ENCODE measurements at regions of chr3 and their contacts with region 1.

Region 1: GRCh38 chr3:120095226-120095978 is 1.2 kb upstream of the GSK3B start:
- DNase-seq: peak; percentile 68 to 91 (median 81)
- ATAC-seq: peak; percentile 27
- H3K4me3 ChIP-seq: peak overlapping the region; percentile 84 to 89
- H3K4me3 Mint-ChIP-seq: no peak overlapping the region
- H3K27ac ChIP-seq: peak overlapping the region; percentile 98
- H3K27ac Mint-ChIP-seq: no peak overlapping the region
- H3K4me1 ChIP-seq: peaks cover 32% of the 10 kb centered on the region
- H3K4me1 Mint-ChIP-seq: peaks cover 26% of the 10 kb centered on the region
- H3K27me3 ChIP-seq: no peaks in the 10 kb centered on the region
- H3K27me3 Mint-ChIP-seq: no peaks in the 10 kb centered on the region
- CTCF ChIP-seq: no peak

Region 2: GRCh38 chr3:119463171-119464169 is 631.9 kb before region 1 on chr3 and contains the start of gene TMEM39A:
- CTCF ChIA-PET with region 1: no interaction called
- POLR2A ChIA-PET with region 1: interaction called, 10 read pairs
- intact Hi-C with region 1: loop called (anchors 1 to 5 kb)
- DNase-seq: peak; percentile 98 to 100 (median 99)
- ATAC-seq: peak; percentile 86
- H3K4me3 ChIP-seq: peak within 1 kb of the TSS; percentile 93 to 94
- H3K4me3 Mint-ChIP-seq: peak within 1 kb of the TSS; percentile 93
- H3K27ac ChIP-seq: peak within 1 kb of the TSS; percentile 85 to 97
- H3K27ac Mint-ChIP-seq: peak within 1 kb of the TSS; percentile 96
- H3K4me1 ChIP-seq: peaks cover 19% of the 10 kb centered on the region
- H3K4me1 Mint-ChIP-seq: peaks cover 44% of the 10 kb centered on the region
- H3K27me3 ChIP-seq: no peaks in the 10 kb centered on the region
- H3K27me3 Mint-ChIP-seq: no peaks in the 10 kb centered on the region
- CTCF ChIP-seq: no peak
- total RNA-seq, gene TMEM39A: 67.8 to 68.0 TPM

Region 3: DNA sequence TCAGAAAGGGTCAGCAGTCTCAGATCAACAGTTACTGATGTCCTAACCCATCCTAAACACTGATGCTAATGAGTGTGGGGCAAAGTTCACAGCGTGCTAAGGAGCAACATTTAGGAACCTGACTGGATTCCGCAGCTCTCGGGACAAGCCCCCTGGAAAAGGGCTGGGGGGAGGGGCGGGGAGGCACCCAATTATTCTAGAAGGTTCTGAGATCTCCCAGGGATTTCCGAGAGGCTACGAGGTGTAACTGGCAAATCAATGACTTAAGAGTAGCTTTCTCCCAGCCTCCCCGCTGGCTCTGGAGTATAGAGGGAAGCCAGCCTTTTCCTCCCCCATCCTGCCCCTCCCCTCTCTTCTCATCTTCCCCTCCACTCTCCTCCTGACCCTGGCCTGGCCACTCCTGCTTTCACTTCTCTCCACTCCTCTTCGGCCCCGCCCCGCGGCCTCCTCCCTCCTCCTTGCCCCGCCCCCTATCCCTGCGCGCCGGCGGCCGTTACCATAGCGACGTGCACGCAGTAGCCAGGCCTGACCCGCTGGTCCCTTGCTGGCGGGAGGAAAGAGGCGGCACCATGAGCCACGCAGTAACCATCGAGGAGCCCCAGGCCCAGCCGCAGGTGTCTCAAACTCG is 392.8 kb before region 1 on chr3 and contains the start of gene CFAP91:
- CTCF ChIA-PET with region 1: no interaction called
- POLR2A ChIA-PET with region 1: no interaction called
- intact Hi-C with region 1: loop called in 1 of 2 experiments (anchors 10 kb)
- DNase-seq: peak; percentile 61 to 89 (median 79)
- ATAC-seq: peak; percentile 89
- H3K4me3 ChIP-seq: peak within 1 kb of the TSS; percentile 54 to 62
- H3K4me3 Mint-ChIP-seq: peak within 1 kb of the TSS; percentile 79
- H3K27ac ChIP-seq: no peak within 1 kb of the TSS
- H3K27ac Mint-ChIP-seq: no peak within 1 kb of the TSS
- H3K4me1 ChIP-seq: peaks cover 18% of the 10 kb centered on the region
- H3K4me1 Mint-ChIP-seq: peaks cover 31% of the 10 kb centered on the region
- H3K27me3 ChIP-seq: no peaks in the 10 kb centered on the region
- H3K27me3 Mint-ChIP-seq: peaks cover 5% of the 10 kb centered on the region
- CTCF ChIP-seq: no peak
- total RNA-seq, gene CFAP91: not detected

Region 4: GRCh38 chr3:120052225-120052624 is 43.2 kb before region 1 on chr3:
- CTCF ChIA-PET with region 1: no interaction called
- POLR2A ChIA-PET with region 1: interaction called, 5 read pairs
- intact Hi-C with region 1: loop called in 1 of 2 experiments (anchors 5 kb)
- DNase-seq: peak in 1 of 9 experiments; percentile 12
- ATAC-seq: no peak
- H3K4me3 ChIP-seq: no peak overlapping the region
- H3K4me3 Mint-ChIP-seq: peak overlapping the region; percentile 35
- H3K27ac ChIP-seq: no peak overlapping the region
- H3K27ac Mint-ChIP-seq: peak overlapping the region; percentile 25
- H3K4me1 ChIP-seq: peaks cover 27% of the 10 kb centered on the region
- H3K4me1 Mint-ChIP-seq: peaks cover 86% of the 10 kb centered on the region
- H3K27me3 ChIP-seq: no peaks in the 10 kb centered on the region
- H3K27me3 Mint-ChIP-seq: no peaks in the 10 kb centered on the region
- CTCF ChIP-seq: no peak

Region 5: DNA sequence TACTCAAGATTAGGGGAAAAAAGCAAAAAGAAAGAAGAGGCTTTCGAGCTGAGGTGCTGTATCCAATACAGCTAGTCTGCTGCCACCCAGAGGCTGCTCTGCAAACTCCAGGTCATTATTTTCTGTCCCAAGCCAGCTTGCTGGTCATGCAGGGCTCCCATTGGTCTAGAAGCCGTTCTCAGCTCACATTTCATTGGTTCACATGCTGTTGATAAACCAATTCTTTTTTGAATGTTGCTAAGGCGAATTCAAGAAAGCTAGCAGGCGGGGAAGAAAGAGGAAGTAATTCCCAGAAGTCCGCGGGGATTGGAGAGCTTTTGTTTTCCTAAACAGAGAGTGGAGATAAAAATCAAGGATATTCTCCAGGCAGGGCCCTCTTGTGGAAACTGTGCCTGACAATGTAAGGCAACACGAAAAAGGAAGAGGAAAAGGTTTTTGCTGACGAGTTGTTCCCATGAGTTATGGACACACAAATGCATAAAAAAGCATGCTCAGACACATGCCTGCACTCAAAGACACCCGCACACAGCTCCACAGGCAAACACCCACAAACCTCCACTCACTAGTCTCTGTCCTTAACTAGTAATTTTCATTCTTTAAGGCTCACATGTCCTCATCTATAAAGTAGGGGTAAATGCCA is 322.0 kb after region 1 on chr3:
- CTCF ChIA-PET with region 1: interaction called, 3 read pairs
- POLR2A ChIA-PET with region 1: no interaction called
- intact Hi-C with region 1: loop called in 1 of 2 experiments (anchors 5 kb)
- DNase-seq: peak; percentile 66 to 90 (median 80)
- ATAC-seq: peak; percentile 99
- H3K4me3 ChIP-seq: peak overlapping the region; percentile 47 to 55
- H3K4me3 Mint-ChIP-seq: peak overlapping the region; percentile 84
- H3K27ac ChIP-seq: no peak overlapping the region
- H3K27ac Mint-ChIP-seq: no peak overlapping the region
- H3K4me1 ChIP-seq: no peaks in the 10 kb centered on the region
- H3K4me1 Mint-ChIP-seq: peaks cover 21% of the 10 kb centered on the region
- H3K27me3 ChIP-seq: no peaks in the 10 kb centered on the region
- H3K27me3 Mint-ChIP-seq: peaks cover 4% of the 10 kb centered on the region
- CTCF ChIP-seq: peak; percentile 87

Region 6: GRCh38 chr3:121834696-121835464 is 1739.5 kb after region 1 on chr3 and contains the starts of genes EAF2 and IQCB1:
- CTCF ChIA-PET with region 1: no interaction called
- POLR2A ChIA-PET with region 1: no interaction called
- intact Hi-C with region 1: loop called in 1 of 2 experiments (anchors 10 kb)
- DNase-seq: peak; percentile 91 to 98 (median 95)
- ATAC-seq: peak; percentile 97
- H3K4me3 ChIP-seq: peak within 1 kb of the TSS; percentile 74 to 91
- H3K4me3 Mint-ChIP-seq: peak within 1 kb of the TSS; percentile 93
- H3K27ac ChIP-seq: peak within 1 kb of the TSS; percentile 82 to 87
- H3K27ac Mint-ChIP-seq: peak within 1 kb of the TSS; percentile 94
- H3K4me1 ChIP-seq: peaks cover 25% of the 10 kb centered on the region
- H3K4me1 Mint-ChIP-seq: peaks cover 53% of the 10 kb centered on the region
- H3K27me3 ChIP-seq: no peaks in the 10 kb centered on the region
- H3K27me3 Mint-ChIP-seq: no peaks in the 10 kb centered on the region
- CTCF ChIP-seq: no peak
- total RNA-seq, gene EAF2: 3.5 to 3.7 TPM
- total RNA-seq, gene IQCB1: 36.5 to 42.2 TPM